ENCODE measurements at regions of chr3 and their contacts with region 1.

Region 1: DNA sequence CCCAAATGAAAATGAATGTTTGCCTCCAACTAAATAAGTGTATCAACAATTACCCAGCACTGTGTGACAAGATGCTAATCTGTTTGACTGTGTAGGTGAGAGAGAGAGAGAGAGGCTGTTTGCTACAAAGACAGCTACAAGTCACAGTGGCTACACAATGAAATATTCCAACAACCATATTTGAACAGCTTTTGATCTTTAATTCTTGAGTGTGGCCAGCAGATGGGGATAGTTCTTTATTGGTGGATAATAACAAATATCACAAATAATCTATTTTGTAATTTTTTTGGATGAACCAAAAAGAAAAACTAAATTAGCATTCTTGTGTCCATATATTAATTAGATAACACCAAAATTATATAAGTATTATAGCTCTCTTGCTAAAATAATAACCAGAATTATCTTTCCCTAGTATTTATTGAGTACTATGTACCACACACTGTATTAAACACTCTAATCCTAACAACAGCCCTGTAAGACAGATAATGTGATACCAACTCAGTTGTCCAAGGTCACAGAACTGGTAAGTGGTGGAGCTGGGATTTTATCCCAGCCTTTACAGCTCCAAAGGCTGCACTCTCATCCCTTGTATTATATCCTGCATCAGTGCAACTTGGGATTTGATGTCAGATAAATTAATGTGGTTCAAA is 61.9 kb upstream of the C3orf80 start:
- H3K4me3 Mint-ChIP-seq: no peak overlapping the region
- H3K27ac Mint-ChIP-seq: no peak overlapping the region
- H3K4me1 Mint-ChIP-seq: no peaks in the 10 kb centered on the region
- H3K27me3 Mint-ChIP-seq: no peaks in the 10 kb centered on the region

Region 2: DNA sequence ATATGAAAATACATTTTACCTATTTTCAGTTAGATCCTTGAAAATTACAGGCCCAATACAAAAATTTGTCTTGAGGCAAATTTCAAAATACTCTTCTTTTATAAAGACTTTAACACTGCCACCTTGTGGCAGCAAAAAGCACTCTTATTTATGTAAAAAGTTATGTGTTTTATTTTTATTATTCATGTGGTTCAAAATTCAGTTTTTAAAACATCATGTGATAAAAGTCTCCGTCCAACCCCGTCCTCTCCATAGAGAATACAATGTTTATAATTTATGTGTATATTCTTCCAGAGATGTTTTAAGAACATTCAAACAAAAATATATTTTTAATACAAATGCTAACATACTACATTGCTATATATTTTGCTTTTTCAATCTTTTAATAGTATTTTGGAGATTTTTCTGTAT is 323.1 kb after region 1 on chr3:
- intact Hi-C with region 1: loop called (anchors 5 kb)
- H3K4me3 Mint-ChIP-seq: no peak overlapping the region
- H3K27ac Mint-ChIP-seq: no peak overlapping the region
- H3K4me1 Mint-ChIP-seq: peaks cover 7% of the 10 kb centered on the region
- H3K27me3 Mint-ChIP-seq: no peaks in the 10 kb centered on the region